Common myeloid progenitor, CD34-positive (primary cell): ENCODE measurements at regions of chr20 and their contacts with region 1.

Region 1: GRCh38 chr20:31822421-31823330 is 3.5 kb downstream of the MYLK2 start:
- DNase-seq: peak; percentile 69 to 87 (median 81)
- H3K4me3 ChIP-seq: peak overlapping the region in 3 of 7 experiments; percentile 32 to 48 (median 43)
- H3K27ac ChIP-seq: no peak overlapping the region
- H3K4me1 ChIP-seq: peaks cover 0 to 26% (median 19%) of the 10 kb centered on the region in 4 experiments
- H3K27me3 ChIP-seq: no peaks in the 10 kb centered on the region

Region 2: GRCh38 chr20:31803552-31804291 is 19.0 kb before region 1 on chr20:
- CTCF ChIA-PET with region 1: interaction called, 10 read pairs
- POLR2A ChIA-PET with region 1: no interaction called
- DNase-seq: peak in 2 of 3 donors; percentile 35 to 56
- H3K4me3 ChIP-seq: no peak overlapping the region
- H3K27ac ChIP-seq: no peak overlapping the region
- H3K4me1 ChIP-seq: peaks cover 5 to 34% (median 25%) of the 10 kb centered on the region in 4 experiments
- H3K27me3 ChIP-seq: no peaks in the 10 kb centered on the region

Region 3: GRCh38 chr20:31835977-31836852 is 13.5 kb after region 1 on chr20:
- CTCF ChIA-PET with region 1: interaction called, 58 read pairs
- POLR2A ChIA-PET with region 1: interaction called, 3 read pairs
- DNase-seq: peak; percentile 90 to 98 (median 97)
- H3K4me3 ChIP-seq: peak overlapping the region in 4 of 7 experiments; percentile 14 to 37 (median 26)
- H3K27ac ChIP-seq: no peak overlapping the region
- H3K4me1 ChIP-seq: peaks cover 3 to 59% (median 55%) of the 10 kb centered on the region in 4 experiments
- H3K27me3 ChIP-seq: no peaks in the 10 kb centered on the region

Region 4: DNA sequence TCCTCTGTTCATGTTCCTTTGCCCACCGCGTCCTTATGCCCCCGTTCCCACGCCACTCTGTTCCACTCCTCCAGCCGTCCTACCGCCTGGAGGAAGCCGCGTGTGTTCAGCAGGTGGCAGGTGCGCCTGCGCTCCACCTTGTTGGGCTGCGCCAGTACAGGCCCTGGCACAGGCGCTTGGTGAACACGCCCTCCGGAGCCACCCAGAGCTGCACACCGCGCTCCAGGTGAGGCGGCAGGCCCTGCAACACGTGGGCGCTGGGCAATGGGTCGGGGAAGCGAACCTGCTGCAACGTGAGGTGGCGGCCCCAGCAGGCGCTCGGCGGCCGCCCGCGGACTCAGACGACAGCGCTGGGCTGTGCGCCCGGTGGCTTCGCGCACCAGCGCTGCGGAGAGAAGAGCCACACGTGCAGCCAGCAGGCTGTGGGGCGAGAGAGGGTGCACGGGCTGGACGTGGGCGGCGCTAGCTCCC is 26.8 kb after region 1 on chr20:
- CTCF ChIA-PET with region 1: interaction called, 131 read pairs
- POLR2A ChIA-PET with region 1: no interaction called
- DNase-seq: no peak
- H3K4me3 ChIP-seq: no peak overlapping the region
- H3K27ac ChIP-seq: no peak overlapping the region
- H3K4me1 ChIP-seq: peaks cover 0 to 3% (median 1%) of the 10 kb centered on the region in 4 experiments
- H3K27me3 ChIP-seq: peaks cover 0 to 32% (median 11%) of the 10 kb centered on the region in 5 experiments

Region 5: DNA sequence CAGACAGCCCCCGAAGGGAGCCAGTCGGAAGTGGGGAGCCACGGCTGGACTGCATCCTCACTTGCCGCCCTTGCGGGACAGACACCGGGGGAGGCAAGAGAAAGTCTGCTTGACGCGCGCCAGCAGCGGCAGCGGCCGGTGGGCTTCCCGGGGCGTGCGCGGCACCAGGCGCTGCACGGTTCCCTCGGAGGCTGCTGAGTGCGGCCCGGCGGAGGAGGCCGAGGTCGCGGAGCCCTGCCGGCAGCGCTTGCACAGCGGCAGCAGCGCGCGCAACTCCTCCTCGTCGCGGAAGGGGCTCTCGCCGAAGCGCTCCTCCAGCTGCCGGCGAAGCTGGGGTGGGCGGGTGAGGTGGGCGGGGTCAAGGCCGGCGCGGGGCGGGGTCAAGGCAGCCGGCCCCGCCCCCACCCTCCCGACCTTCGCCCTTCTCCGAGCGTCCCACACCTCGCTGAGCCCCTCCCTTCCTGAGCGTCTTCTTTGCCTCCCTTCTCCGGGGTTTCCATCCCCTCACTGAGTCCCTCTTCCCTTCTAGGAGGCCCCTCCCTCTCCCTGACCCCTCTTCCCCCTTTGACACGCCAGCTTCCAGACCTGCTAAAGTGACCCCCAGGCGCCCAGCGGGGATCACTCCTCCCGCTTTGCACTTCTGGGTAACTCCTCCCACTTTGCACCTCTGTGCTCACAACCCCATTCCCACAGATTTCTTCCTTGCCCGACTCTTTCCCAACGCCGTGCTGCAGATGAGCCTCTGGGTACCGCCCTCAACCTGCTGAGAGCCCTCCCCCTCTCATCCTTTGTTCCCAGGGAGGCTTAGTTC is 38.9 kb after region 1 on chr20:
- CTCF ChIA-PET with region 1: no interaction called
- POLR2A ChIA-PET with region 1: no interaction called
- DNase-seq: peak; percentile 83 to 88 (median 88)
- H3K4me3 ChIP-seq: peak overlapping the region; percentile 34 to 81 (median 63)
- H3K27ac ChIP-seq: no peak overlapping the region
- H3K4me1 ChIP-seq: peaks cover 0 to 42% (median 24%) of the 10 kb centered on the region in 4 experiments
- H3K27me3 ChIP-seq: peaks cover 0 to 18% (median 3%) of the 10 kb centered on the region in 5 experiments

Region 6: GRCh38 chr20:31894980-31895675 is 72.5 kb after region 1 on chr20:
- CTCF ChIA-PET with region 1: no interaction called
- POLR2A ChIA-PET with region 1: no interaction called
- DNase-seq: peak; percentile 89 to 94 (median 92)
- H3K4me3 ChIP-seq: peak overlapping the region in 2 of 7 experiments; percentile 11 to 52
- H3K27ac ChIP-seq: peak overlapping the region; percentile 40 to 69
- H3K4me1 ChIP-seq: peaks cover 0 to 10% (median 6%) of the 10 kb centered on the region in 4 experiments
- H3K27me3 ChIP-seq: no peaks in the 10 kb centered on the region

Region 7: GRCh38 chr20:32091888-32092346 is 269.2 kb after region 1 on chr20:
- CTCF ChIA-PET with region 1: interaction called, 21 read pairs
- POLR2A ChIA-PET with region 1: no interaction called
- DNase-seq: peak; percentile 77 to 89 (median 85)
- H3K4me3 ChIP-seq: no peak overlapping the region
- H3K27ac ChIP-seq: no peak overlapping the region
- H3K4me1 ChIP-seq: no peaks in the 10 kb centered on the region
- H3K27me3 ChIP-seq: no peaks in the 10 kb centered on the region